ENCODE measurements at regions of chr6 and their contacts with region 1.

Region 1: DNA sequence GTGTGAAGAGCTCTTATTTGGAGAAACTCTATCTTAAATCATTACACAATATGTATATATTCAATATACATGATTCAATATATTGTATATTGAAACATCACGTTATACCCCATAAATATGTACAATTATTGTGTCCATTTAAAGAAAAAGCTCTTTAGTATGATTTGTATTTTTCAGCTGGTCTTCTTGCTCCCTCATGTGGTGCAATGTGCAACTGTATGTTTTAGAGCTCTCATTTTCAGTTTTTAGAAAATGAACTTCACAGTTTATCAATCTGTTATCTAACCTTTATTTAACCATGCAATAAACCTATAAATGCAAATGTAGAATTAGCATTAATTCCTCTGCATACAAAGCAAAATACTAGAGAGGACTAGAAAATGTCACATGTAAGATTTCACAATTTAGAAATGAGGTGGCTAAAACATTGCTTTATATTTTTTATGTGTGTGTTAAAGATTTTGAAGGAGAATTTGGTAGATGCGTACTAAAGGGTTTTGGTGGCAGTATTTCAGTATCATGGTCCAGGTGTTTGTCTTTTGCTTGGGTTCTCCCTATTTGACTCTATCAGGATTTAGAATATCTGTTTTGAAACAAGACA is 167.1 kb downstream of the PHF3 start:
- DNase-seq: no peak
- H3K4me3 ChIP-seq: no peak overlapping the region
- CTCF ChIP-seq: peak; percentile 38

Region 2: DNA sequence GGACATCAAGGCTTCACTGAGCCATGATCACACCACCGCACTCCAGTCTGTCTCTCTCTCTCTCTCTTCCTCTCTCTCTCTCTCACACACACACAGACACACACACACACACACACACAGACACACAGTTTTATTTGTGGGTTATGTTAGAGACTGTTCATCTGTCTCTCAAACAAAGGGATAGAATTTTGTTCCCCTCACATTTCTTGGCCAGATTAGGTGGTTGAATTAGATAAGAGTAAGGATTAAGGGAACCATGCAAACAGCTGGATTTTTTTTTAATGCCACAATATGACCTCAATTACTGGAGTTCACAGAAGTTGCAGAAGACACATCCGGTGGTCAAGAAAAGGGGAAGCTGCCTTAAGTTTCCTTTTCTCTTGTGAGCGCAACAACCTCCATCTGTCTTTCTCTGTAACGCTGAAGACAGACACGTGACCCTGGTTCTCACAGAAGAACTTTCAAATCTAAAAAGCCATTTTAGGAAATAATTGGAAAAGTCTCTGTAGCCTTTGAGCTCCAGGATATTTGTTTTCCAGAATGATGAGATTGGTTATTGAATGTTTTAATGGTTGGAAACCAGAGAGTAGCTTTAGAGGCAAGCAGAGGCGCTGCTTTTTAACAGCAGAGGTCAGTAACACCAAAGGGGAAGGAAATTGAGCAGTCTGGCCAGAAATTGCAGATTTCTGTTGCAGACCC is 450.0 kb before region 1 on chr6:
- CTCF ChIA-PET with region 1: interaction called, 164 read pairs
- POLR2A ChIA-PET with region 1: interaction called, 3 read pairs
- DNase-seq: no peak
- H3K4me3 ChIP-seq: no peak overlapping the region
- CTCF ChIP-seq: peak; percentile 58

Region 3: GRCh38 chr6:63598049-63599036 is 204.4 kb before region 1 on chr6:
- CTCF ChIA-PET with region 1: interaction called, 23 read pairs
- POLR2A ChIA-PET with region 1: no interaction called
- DNase-seq: no peak
- H3K4me3 ChIP-seq: peak overlapping the region; percentile 56
- CTCF ChIP-seq: peak; percentile 88

Region 4: GRCh38 chr6:63764318-63764916 is 38.3 kb before region 1 on chr6:
- CTCF ChIA-PET with region 1: interaction called, 10 read pairs
- POLR2A ChIA-PET with region 1: no interaction called
- DNase-seq: no peak
- H3K4me3 ChIP-seq: no peak overlapping the region
- CTCF ChIP-seq: no peak

Region 5: DNA sequence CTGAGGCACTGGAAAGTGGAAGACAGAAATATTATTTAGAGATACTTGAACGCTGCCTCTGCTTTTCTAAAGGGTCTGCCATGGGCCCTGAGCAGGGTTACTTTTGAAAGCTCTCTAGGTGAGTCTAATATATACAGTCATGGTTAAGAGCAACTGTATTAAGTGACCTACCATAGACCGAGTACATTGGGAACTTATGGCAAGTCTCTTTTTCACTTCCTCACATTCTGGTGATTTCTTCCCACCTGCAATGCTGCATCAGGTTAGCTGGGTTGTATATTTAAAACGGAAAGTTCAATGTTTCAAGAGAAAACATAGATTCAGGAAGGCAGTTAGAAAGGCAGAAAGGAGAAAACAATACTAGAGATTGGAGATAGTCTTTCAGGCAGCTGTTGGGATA is 12.4 kb before region 1 on chr6:
- CTCF ChIA-PET with region 1: interaction called, 25 read pairs
- POLR2A ChIA-PET with region 1: no interaction called
- DNase-seq: no peak
- H3K4me3 ChIP-seq: no peak overlapping the region
- CTCF ChIP-seq: no peak

Measured in AG04449 (cell line).